ENCODE measurements at regions of chr6 and their contacts with region 1.

Region 1: GRCh38 chr6:27672113-27672799 is 199.4 kb upstream of the ZNF184 start:
- DNase-seq: peak; percentile 59 to 96 (median 70)
- ATAC-seq: peak; percentile 72
- H3K4me3 ChIP-seq: peak overlapping the region; percentile 53
- H3K27ac ChIP-seq: peak overlapping the region; percentile 82
- H3K4me1 ChIP-seq: peaks cover 7% of the 10 kb centered on the region in 2 experiments; a peak in 4 of 5 replicates
- H3K27me3 ChIP-seq: no peaks in the 10 kb centered on the region
- CTCF ChIP-seq: no peak
- EP300 ChIP-seq: peak; percentile 70
- POLR2A ChIP-seq: no peak
- RAD21 ChIP-seq: peak in 1 of 2 experiments; percentile 31; a peak in 2 of 4 replicates

Region 2: DNA sequence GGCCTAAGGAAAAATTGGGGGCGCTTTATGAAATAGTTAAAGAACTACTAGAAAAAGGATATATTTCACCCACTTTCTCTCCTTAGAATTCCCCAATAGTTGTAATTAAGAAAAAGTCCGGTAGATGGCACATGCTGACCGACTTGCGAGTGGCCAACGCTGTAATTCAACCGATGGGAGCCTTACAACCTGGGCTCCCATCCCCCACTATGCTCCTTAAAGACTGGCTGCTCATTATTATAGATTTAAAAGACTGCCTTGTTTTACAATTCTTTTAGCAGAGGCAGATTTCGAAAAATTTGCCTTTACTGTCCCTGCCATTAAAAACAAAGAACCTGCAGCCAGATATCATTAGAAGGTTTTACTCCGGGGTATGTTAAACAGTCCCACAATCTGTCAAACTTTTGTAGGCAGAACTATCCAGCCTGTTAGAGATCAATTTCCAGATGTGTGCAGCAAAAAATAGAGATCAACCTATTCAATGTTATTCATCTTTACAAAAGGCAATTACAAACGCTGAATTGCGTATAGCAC is 483.3 kb before region 1 on chr6:
- CTCF ChIA-PET with region 1: interaction called, 3 read pairs
- POLR2A ChIA-PET with region 1: interaction called, 3 read pairs
- in situ Hi-C with region 1: no loop called
- intact Hi-C with region 1: loop called (anchors 10 kb)
- DNase-seq: peak; percentile 69 to 93 (median 78)
- ATAC-seq: peak; percentile 85
- H3K4me3 ChIP-seq: peak overlapping the region; percentile 56
- H3K27ac ChIP-seq: peak overlapping the region; percentile 80
- H3K4me1 ChIP-seq: peaks cover 8% of the 10 kb centered on the region in 2 experiments; a peak in 4 of 5 replicates
- H3K27me3 ChIP-seq: no peaks in the 10 kb centered on the region
- CTCF ChIP-seq: peak; percentile 78 to 92 (median 85)
- EP300 ChIP-seq: no peak; the same call in 1 of the 2 replicates
- POLR2A ChIP-seq: no peak
- RAD21 ChIP-seq: peak; percentile 93 to 95

Region 3: GRCh38 chr6:27545271-27546046 is 126.8 kb before region 1 on chr6:
- CTCF ChIA-PET with region 1: no interaction called
- POLR2A ChIA-PET with region 1: no interaction called
- in situ Hi-C with region 1: no loop called
- intact Hi-C with region 1: loop called (anchors 5 kb)
- DNase-seq: peak; percentile 52 to 97 (median 68)
- ATAC-seq: peak; percentile 62
- H3K4me3 ChIP-seq: peak overlapping the region; percentile 50
- H3K27ac ChIP-seq: peak overlapping the region; percentile 77
- H3K4me1 ChIP-seq: peaks cover 4 to 25% of the 10 kb centered on the region in 2 experiments; a peak in 4 of 5 replicates
- H3K27me3 ChIP-seq: no peaks in the 10 kb centered on the region
- CTCF ChIP-seq: no peak
- EP300 ChIP-seq: peak; percentile 70
- POLR2A ChIP-seq: no peak
- RAD21 ChIP-seq: peak in 1 of 2 experiments; percentile 33; a peak in 1 of 4 replicates

Region 4: DNA sequence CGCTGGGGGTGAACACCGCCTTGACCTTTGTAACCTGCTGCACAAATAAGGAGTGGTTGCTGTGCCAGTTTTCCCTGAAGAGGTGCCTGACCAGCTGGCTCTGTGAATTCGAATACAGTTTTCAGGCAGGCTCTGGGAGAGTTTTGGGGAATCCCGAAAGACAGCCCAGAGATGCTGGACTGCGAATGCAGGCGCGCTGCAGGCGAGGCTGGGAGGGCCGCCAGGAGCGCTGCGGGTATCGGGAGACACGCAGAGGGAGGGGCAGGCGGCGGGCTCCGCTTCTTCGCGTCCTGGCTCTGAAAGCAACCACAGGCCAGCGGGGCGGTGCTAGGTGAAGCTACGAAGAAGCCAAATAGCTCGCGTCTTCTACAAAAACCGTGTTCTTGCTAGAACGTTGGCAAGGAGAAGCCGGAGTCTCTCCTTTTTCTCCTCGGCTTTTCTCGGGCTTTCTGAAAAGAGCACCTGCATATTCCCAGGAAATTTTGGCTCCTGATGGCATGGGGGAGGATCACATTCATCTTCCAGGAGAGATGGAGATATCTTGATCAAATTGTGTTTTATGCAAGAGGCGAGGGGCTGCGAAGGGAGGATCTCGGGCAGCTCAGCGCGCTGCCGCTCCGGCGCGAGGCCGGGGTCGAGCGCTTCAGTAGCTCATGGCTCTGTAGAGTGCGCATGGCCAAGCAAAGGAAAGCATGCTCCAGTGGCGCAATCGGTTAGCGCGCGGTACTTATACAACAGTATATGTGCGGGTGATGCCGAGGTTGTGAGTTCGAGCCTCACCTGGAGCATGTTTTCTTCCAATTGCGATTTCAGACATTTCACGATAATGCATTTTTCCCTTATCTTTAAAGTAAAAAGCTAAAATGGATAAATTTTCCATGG is 41.3 kb before region 1 on chr6:
- CTCF ChIA-PET with region 1: no interaction called
- POLR2A ChIA-PET with region 1: interaction called, 4 read pairs
- in situ Hi-C with region 1: no loop called
- intact Hi-C with region 1: loop called (anchors 1 kb)
- DNase-seq: peak; percentile 79 to 94 (median 83)
- ATAC-seq: peak; percentile 99
- H3K4me3 ChIP-seq: peak overlapping the region; percentile 57
- H3K27ac ChIP-seq: peak overlapping the region; percentile 71
- H3K4me1 ChIP-seq: peaks cover 8 to 10% of the 10 kb centered on the region in 2 experiments; a peak in 4 of 5 replicates
- H3K27me3 ChIP-seq: no peaks in the 10 kb centered on the region
- CTCF ChIP-seq: peak; percentile 55 to 64 (median 63); a peak in 5 of 6 replicates
- EP300 ChIP-seq: peak; percentile 76
- POLR2A ChIP-seq: no peak
- RAD21 ChIP-seq: 0 out of 4 replicates have a peak, but pooled peaks have one; percentile 2 to 14

Region 5: GRCh38 chr6:27687154-27688013 is 15.1 kb after region 1 on chr6:
- CTCF ChIA-PET with region 1: no interaction called
- POLR2A ChIA-PET with region 1: interaction called, 10 read pairs
- in situ Hi-C with region 1: no loop called
- intact Hi-C with region 1: loop called (anchors 1 kb)
- DNase-seq: peak; percentile 78 to 97 (median 82)
- ATAC-seq: peak; percentile 89
- H3K4me3 ChIP-seq: peak overlapping the region; percentile 63
- H3K27ac ChIP-seq: peak overlapping the region; percentile 78
- H3K4me1 ChIP-seq: peaks cover 5 to 24% of the 10 kb centered on the region in 2 experiments; a peak in 4 of 5 replicates
- H3K27me3 ChIP-seq: no peaks in the 10 kb centered on the region
- CTCF ChIP-seq: peak; percentile 92 to 96 (median 95)
- EP300 ChIP-seq: 0 out of 2 replicates have a peak, but pooled peaks have one; percentile 14
- POLR2A ChIP-seq: no peak
- RAD21 ChIP-seq: peak; percentile 71 to 87

Region 6: DNA sequence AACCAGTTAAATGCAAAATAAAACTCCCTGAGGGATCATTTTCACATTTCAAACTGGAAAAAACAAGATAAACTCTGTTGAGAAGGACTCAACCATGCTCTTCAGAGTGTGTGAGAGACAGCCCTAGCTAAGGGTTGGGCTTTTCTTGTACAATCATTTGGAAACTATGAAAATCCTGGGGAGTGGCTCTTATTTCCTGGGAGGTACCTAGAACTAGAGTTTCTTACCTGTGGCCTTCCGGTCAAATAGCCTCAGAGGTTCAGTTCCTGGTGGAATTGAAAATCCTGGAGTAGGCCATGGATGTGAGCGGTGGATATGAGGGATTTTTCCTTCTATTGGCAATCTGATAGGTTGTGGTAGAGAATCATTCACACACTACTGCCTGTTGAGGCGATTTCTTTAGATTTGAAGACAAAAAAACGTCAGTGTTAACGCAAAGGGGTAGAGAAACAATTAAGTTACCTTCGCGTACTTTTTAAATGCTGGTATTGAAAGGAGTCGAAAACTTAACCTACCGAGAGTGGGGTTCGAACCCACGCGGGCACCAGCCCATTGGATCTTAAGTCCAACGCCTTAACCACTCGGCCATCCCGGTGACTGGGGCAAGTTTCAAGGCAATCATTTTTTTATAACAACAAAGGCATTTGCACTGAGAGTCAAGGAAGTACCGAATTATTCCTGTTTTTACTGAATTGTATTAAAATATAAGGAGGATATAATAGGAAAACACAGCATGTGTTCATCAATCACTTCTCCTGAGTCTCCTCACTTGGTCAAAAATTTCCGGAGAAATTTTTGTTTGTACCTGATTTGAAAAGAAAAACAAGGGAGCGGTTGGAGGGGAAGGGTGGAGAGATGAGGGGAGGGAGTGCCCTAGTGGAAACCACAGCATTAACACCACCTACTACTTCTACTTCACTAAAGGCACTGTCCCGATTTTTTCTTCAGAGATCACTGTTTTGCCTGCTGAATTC is 48.6 kb after region 1 on chr6:
- CTCF ChIA-PET with region 1: no interaction called
- POLR2A ChIA-PET with region 1: no interaction called
- in situ Hi-C with region 1: no loop called
- intact Hi-C with region 1: no loop called
- DNase-seq: peak; percentile 59 to 88 (median 69)
- ATAC-seq: peak; percentile 87
- H3K4me3 ChIP-seq: peak overlapping the region; percentile 31
- H3K27ac ChIP-seq: peak overlapping the region; percentile 28; the same call in 2 of the 3 replicates
- H3K4me1 ChIP-seq: peaks cover 0 to 12% of the 10 kb centered on the region in 2 experiments; a peak in 2 of 5 replicates
- H3K27me3 ChIP-seq: no peaks in the 10 kb centered on the region
- CTCF ChIP-seq: peak in 1 of 3 experiments; percentile 30; a peak in 2 of 6 replicates
- EP300 ChIP-seq: no peak
- POLR2A ChIP-seq: no peak
- RAD21 ChIP-seq: peak in 1 of 2 experiments; percentile 23; a peak in 2 of 4 replicates